AG04449 (cell line): ENCODE measurements at regions of chr17 and their contacts with region 1.

Region 1: GRCh38 chr17:45385331-45385997 is 47.2 kb downstream of the ARHGAP27 start:
- DNase-seq: no peak
- H3K4me3 ChIP-seq: no peak overlapping the region
- CTCF ChIP-seq: peak; percentile 96

Region 2: DNA sequence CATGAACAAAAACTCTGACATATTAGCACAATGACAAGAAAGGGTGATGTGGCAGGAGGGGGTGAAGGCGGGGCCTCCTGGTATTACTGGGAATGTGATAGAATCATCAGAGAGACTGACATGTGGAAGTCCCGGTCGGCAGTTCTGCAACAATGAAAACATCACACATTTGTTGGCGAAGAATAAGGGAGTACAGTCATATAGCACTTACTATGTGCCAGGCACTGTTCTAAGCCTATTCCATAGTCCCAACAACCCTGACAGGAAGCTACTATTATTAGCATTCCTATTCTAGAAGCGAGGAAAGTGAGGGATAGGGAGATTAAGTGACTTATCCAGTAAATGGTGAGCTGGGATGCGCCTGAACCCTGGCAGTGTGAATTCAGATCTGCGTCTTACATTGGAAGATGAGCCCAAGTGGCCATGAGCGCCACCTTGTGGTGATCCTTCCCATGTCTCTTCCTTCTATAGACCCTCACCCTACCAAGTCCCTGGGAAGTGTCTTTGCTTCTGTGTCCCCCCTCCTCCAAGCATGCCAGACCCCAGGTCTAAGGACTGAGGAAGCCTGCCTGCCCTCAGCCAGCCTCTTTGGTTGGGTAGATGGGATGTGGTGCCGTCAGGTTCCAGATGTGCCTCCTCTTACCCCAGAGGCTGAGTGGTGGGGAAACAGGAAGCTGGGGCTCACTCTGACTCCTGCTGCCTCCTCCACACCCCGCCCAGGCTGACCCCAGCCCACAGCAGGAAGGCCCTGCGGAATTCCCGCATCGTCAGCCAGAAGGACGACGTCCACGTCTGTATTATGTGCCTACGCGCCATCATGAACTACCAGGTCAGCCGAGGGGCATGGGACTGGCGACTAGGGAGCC is 149.8 kb before region 1 on chr17:
- CTCF ChIA-PET with region 1: interaction called, 33 read pairs
- POLR2A ChIA-PET with region 1: no interaction called
- DNase-seq: peak; percentile 9
- H3K4me3 ChIP-seq: no peak overlapping the region
- CTCF ChIP-seq: peak; percentile 87

Region 3: DNA sequence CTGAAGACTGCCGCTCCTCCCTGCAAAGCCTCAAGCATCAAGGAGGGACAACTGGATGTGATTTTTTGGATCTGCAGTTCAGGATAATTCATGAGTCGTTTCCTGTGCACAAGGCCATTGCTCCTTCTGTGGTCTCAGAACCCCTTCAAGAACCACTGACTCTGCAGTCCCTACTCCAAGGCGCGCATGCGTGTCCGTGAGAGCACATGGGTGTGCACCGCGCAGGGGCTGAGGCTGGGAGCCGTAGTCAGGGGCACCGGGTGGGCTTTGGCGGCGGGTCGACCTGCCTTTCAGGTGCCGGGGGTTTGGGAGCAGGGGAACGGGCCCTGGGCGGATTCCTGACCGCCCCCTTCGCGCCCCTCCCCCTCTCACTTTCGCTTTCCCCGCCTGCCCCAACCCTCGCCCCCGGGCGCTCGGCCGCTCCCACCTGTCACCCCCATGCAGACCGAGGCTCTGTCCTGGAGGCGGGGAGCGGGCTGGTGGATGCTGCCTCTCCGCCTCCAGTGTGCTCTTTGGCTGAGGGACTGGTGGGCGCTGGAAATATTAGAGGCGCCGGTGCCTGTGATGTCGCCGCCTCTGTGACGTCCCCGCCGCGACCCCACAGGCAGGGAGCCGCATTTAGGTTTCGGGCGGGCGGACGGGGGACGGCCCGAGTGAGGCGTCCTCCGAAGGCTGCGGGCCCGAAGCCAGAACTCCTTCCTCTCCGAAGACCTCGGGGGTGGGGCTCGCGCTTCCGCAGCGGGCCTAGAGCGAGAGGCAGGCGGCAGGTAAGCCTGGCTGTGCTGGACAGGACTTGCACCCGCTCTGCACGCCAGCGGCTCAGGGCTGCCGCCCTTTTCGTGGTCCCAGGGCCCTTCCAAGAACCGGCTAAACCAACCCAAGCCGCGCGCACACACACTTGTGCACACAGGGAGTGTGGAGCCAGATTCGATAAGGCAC is 123.6 kb before region 1 on chr17 and contains the start of gene SPATA32:
- CTCF ChIA-PET with region 1: interaction called, 828 read pairs
- POLR2A ChIA-PET with region 1: no interaction called
- DNase-seq: no peak
- H3K4me3 ChIP-seq: peak within 1 kb of the TSS; percentile 23
- CTCF ChIP-seq: no peak

Region 4: DNA sequence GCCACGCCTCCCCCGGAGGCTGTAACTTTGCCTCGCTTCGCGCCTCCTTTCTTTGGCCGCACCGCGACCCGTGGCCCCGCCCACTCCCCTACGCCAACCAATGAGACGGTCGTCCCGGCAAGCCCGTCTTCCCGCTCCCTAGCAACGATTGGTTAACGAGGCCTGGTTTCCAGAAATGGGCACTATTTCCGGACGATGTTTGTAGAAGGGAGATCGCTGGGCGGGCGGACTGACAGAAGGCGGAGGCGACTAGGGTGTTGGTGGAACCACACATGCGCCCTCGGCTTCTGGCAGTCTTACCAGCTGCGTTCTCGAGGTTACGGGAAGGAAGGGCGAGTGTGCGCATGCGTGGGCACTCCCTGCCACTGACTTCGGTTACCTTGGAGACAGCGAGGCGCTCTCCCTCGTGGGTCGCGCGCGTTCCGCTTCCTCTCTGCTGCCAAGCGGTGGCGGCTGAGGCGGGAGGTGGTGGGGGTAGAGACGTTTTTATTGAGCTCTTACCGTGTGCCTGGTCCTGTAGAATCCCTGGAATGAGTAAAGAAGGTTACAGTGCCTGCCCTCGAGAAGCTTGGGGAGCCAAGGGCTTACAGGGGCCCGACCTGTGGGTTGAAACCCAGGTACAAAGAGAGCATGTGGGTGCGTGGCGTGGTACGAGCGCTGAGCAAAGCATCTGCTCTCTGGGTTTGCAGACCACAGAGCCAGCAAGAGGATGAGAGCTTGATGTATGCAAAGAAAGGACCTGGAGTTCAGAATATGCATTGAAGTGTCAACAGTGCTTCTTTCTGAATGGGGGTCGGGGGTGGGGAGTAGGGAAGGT is 68.1 kb before region 1 on chr17:
- CTCF ChIA-PET with region 1: interaction called, 32 read pairs
- POLR2A ChIA-PET with region 1: no interaction called
- DNase-seq: peak; percentile 100
- H3K4me3 ChIP-seq: peak overlapping the region; percentile 57
- CTCF ChIP-seq: no peak